ENCODE measurements at regions of chr1 and their contacts with region 1.

Region 1: DNA sequence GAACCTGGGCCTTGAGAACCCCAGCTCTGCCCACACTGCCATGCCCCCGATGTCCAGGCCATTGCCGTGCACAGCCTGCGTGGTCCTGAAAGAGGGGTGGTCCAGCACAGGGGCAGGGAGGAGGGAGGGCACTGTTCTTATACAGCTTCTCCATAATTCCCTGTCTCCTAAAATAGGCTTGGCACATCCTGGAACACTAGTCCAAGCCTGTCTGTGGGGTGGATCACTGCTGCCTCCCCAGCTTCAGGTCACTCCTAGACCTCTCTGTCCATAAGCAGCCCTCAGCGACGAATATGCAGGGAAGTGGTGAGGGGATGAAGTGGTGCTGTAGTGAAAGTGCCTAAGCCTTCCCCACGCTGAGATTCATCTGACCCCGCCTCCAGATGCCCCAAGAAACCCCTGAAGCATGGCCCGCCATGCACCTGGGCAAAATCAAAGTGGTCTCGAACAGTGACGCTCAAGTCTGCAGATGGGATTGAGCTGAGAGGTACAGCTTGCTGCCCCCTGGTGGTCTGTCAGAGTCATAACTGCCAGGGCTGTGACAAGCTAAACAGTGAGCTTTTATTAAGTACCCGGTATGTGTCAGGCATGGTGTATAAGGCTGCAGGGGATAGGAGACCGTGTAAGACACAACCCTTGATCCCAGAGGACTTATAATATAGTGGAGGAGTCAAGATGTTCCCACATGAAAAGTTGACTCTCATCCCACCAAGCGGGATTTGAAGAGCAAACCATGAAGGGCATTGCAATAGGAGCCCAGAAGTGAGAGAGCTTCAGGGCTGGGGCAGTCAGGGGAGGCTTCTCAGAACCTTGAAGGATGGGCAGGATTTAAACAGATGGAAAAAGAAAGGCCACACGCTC is 66.6 kb downstream of the FAM163A start:
- DNase-seq: peak; percentile 46
- H3K4me3 ChIP-seq: no peak overlapping the region
- H3K27ac ChIP-seq: no peak overlapping the region
- H3K27me3 ChIP-seq: peaks cover 37% of the 10 kb centered on the region
- CTCF ChIP-seq: peak; percentile 92

Region 2: GRCh38 chr1:179714159-179714558 is 95.6 kb before region 1 on chr1:
- CTCF ChIA-PET with region 1: interaction called, 1,155 read pairs
- POLR2A ChIA-PET with region 1: no interaction called
- DNase-seq: no peak
- H3K4me3 ChIP-seq: no peak overlapping the region
- H3K27ac ChIP-seq: no peak overlapping the region
- H3K27me3 ChIP-seq: no peaks in the 10 kb centered on the region
- CTCF ChIP-seq: no peak

Region 3: DNA sequence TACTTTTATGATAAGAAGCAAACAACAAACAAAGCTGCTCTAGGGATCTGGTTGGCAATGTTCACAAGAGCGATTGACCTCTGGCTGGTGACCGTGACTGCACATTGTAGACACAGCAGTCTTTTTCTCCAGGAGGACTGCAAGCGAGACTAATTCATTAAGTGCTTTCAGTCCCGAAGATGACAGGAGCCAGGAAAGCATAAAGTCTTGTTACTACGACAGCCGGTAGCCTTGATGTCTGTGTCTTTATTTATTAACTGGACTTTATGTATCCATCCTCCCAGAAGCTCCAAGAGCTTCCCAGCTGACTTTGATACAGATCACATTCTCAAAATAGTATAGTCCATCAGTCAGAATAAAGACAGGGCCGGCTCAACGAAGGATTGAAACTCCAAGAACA is 48.4 kb before region 1 on chr1:
- CTCF ChIA-PET with region 1: interaction called, 12 read pairs
- POLR2A ChIA-PET with region 1: no interaction called
- DNase-seq: no peak
- H3K4me3 ChIP-seq: no peak overlapping the region
- H3K27ac ChIP-seq: no peak overlapping the region
- H3K27me3 ChIP-seq: peaks cover 24% of the 10 kb centered on the region
- CTCF ChIP-seq: no peak

Region 4: DNA sequence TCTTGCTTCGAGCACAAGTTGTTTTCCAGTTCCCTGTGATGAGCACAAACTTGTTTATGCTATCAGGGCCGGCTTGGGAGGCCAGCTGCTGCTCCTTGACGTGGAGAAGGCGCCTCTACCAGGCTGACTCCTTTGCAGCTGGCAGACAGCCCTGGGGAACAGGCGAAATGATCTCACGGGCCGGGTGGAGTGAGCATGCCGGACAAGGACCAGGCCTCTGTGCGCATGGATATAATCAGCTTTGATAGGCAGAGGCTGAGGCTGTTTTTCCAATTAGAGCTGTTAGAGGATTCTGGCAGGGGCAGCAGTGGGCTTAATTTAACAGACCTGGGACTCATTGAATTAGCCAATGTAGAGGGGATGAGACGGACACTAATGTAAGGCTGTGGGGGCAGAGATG is 27.8 kb before region 1 on chr1:
- CTCF ChIA-PET with region 1: interaction called, 32 read pairs
- POLR2A ChIA-PET with region 1: no interaction called
- DNase-seq: peak; percentile 4
- H3K4me3 ChIP-seq: no peak overlapping the region
- H3K27ac ChIP-seq: no peak overlapping the region
- H3K27me3 ChIP-seq: peaks cover 24% of the 10 kb centered on the region
- CTCF ChIP-seq: no peak

Region 5: DNA sequence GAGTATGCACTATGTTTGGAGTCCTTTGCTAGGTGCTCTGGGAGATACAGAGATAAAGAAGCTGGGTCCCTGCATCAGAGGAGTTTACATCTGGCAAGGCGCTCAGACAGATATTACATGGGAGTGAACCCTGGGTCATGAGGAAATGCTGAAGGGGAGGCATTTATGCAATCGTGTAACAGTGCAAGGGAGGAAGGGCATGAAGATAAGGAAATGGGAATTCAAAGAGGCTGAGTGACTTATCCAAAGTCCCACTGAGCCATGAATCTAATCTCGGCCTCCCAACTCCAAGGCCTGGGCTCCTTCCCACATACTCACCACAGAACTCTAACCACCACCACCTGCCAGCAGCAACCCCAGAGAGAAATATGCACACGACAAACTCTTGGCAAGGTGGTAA is 15.1 kb before region 1 on chr1:
- CTCF ChIA-PET with region 1: interaction called, 40 read pairs
- POLR2A ChIA-PET with region 1: no interaction called
- DNase-seq: no peak
- H3K4me3 ChIP-seq: no peak overlapping the region
- H3K27ac ChIP-seq: no peak overlapping the region
- H3K27me3 ChIP-seq: peaks cover 33% of the 10 kb centered on the region
- CTCF ChIP-seq: no peak

Region 6: GRCh38 chr1:179831852-179832699 is 22.3 kb after region 1 on chr1:
- CTCF ChIA-PET with region 1: interaction called, 97 read pairs
- POLR2A ChIA-PET with region 1: no interaction called
- DNase-seq: no peak
- H3K4me3 ChIP-seq: no peak overlapping the region
- H3K27ac ChIP-seq: no peak overlapping the region
- H3K27me3 ChIP-seq: peaks cover 12% of the 10 kb centered on the region
- CTCF ChIP-seq: no peak

Region 7: DNA sequence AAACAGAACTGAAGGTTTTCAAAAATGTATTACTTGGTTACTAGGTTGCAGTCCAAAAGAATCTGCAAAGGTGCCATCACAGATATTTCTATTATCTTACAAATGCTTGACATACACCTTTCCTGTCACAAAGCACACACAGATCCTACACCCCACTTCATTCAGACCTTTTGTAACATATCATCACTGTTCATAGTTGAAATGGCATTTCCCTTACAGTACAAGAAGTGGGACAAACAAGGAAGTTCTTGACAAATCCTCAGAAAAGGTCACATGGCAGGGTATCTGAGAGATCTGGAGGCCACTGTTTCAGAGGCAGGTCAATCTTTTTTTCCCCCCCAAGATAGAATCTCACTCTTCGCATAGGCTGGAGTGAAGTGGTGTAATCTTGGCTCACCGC is 46.6 kb after region 1 on chr1:
- CTCF ChIA-PET with region 1: interaction called, 12 read pairs
- POLR2A ChIA-PET with region 1: no interaction called
- DNase-seq: no peak
- H3K4me3 ChIP-seq: no peak overlapping the region
- H3K27ac ChIP-seq: no peak overlapping the region
- H3K27me3 ChIP-seq: no peaks in the 10 kb centered on the region
- CTCF ChIP-seq: no peak

Measured in AG04450 (cell line).